SK-N-SH (cell line): ENCODE measurements at regions of chr12 and their contacts with region 1.

Region 1: DNA sequence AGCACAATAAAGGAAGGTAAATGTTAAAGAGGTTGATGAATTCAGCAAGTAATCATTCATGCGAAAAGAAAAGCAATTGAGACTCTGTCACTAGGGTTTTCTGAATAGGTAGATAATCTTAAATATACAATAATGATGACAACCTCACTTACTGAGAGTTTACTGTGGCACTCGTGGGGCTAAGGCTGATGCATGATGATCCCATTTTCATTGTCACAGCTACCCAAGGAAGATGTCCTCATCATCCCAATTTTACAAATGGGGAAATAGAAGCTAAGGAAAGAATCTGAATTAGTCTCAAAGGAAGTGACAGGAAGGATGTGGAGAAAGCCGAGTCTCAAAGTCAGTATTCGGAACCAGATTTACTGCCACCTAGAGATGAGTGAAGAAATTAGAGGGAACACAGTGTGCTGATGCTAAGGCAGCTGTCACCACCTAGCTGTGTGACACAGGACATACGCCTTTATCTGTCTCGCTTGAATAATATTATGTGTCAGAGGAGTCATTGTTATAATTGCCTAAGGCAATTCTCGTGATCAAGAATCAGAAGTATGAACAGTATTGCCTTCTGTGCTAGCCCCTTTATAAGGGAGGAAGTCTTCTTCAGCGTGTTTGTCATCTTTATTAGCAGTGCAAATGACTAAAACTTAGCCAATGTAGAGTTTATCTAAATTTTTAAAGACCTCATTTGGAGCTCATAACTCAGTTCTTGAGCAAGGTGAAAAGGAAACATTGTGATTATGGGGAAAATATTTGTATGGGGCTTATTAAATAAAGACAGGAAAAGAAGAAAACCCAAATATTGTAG is 63.2 kb downstream of the ERGIC2 start:
- DNase-seq: peak; percentile 67
- H3K4me3 ChIP-seq: no peak overlapping the region; a peak in 1 of 4 replicates
- H3K27ac ChIP-seq: peak overlapping the region; percentile 14 to 66; a peak in 3 of 4 replicates
- H3K4me1 ChIP-seq: peaks cover 5 to 14% of the 10 kb centered on the region in 2 experiments; a peak in 3 of 4 replicates
- H3K27me3 ChIP-seq: no peaks in the 10 kb centered on the region
- CTCF ChIP-seq: peak; percentile 66
- EP300 ChIP-seq: no peak
- RAD21 ChIP-seq: peak; percentile 99

Region 2: GRCh38 chr12:29024117-29024516 is 293.6 kb before region 1 on chr12:
- CTCF ChIA-PET with region 1: interaction called, 11 read pairs
- POLR2A ChIA-PET with region 1: no interaction called
- DNase-seq: peak; percentile 8
- H3K4me3 ChIP-seq: no peak overlapping the region
- H3K27ac ChIP-seq: no peak overlapping the region
- H3K4me1 ChIP-seq: peaks cover 0 to 3% of the 10 kb centered on the region in 2 experiments; a peak in 2 of 4 replicates
- H3K27me3 ChIP-seq: no peaks in the 10 kb centered on the region
- CTCF ChIP-seq: peak; percentile 42
- EP300 ChIP-seq: no peak
- RAD21 ChIP-seq: peak; percentile 15; the same call in 1 of the 2 replicates

Region 3: GRCh38 chr12:29073628-29074239 is 244.0 kb before region 1 on chr12:
- CTCF ChIA-PET with region 1: interaction called, 109 read pairs
- POLR2A ChIA-PET with region 1: no interaction called
- DNase-seq: peak; percentile 42
- H3K4me3 ChIP-seq: no peak overlapping the region
- H3K27ac ChIP-seq: no peak overlapping the region
- H3K4me1 ChIP-seq: no peaks in the 10 kb centered on the region; a peak in 2 of 4 replicates
- H3K27me3 ChIP-seq: no peaks in the 10 kb centered on the region
- CTCF ChIP-seq: peak; percentile 71
- EP300 ChIP-seq: no peak
- RAD21 ChIP-seq: peak; percentile 83

Region 4: GRCh38 chr12:29152223-29152868 is 165.4 kb before region 1 on chr12:
- CTCF ChIA-PET with region 1: interaction called, 11 read pairs
- POLR2A ChIA-PET with region 1: no interaction called
- DNase-seq: no peak
- H3K4me3 ChIP-seq: no peak overlapping the region
- H3K27ac ChIP-seq: peak overlapping the region in 1 of 2 experiments; percentile 16; a peak in 1 of 4 replicates
- H3K4me1 ChIP-seq: peaks cover 0 to 17% of the 10 kb centered on the region in 2 experiments; a peak in 2 of 4 replicates
- H3K27me3 ChIP-seq: no peaks in the 10 kb centered on the region
- CTCF ChIP-seq: no peak
- EP300 ChIP-seq: no peak
- RAD21 ChIP-seq: no peak

Region 5: DNA sequence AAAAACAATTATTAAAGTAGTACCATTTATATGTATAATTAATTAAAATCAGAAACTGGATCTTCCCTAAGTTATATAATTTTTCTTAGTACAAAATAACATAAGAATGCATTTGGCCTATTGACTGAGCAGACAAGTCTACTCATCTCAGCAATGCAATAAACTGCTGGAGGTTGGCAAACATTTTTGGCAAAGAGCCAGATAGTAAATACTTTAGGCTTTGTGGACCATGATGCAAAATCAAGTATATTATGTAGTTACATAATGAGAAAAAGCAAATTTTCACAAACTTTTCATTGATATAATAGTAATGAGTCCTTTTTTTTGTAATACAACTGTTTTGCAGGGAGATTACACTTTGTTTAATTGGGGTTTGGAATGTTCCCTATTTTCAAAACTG is 32.3 kb after region 1 on chr12:
- CTCF ChIA-PET with region 1: no interaction called
- POLR2A ChIA-PET with region 1: no interaction called
- DNase-seq: peak; percentile 1
- H3K4me3 ChIP-seq: no peak overlapping the region
- H3K27ac ChIP-seq: no peak overlapping the region
- H3K4me1 ChIP-seq: no peaks in the 10 kb centered on the region
- H3K27me3 ChIP-seq: no peaks in the 10 kb centered on the region
- CTCF ChIP-seq: no peak
- EP300 ChIP-seq: 0 out of 4 replicates have a peak, but pooled peaks of 1 of the 2 experiments have one; percentile 19
- RAD21 ChIP-seq: no peak